Endothelial cell of umbilical vein (primary cell): ENCODE measurements at regions of chr14 and their contacts with region 1.

Region 1: GRCh38 chr14:59189786-59190771 is 1.6 kb downstream of the DAAM1 start:
- DNase-seq: peak; percentile 80
- H3K4me3 ChIP-seq: peak overlapping the region; percentile 77 to 85 (median 78)
- H3K27ac ChIP-seq: peak overlapping the region; percentile 72
- H3K4me1 ChIP-seq: peaks cover 13% of the 10 kb centered on the region
- H3K27me3 ChIP-seq: peaks cover 11 to 24% of the 10 kb centered on the region in 2 experiments
- CTCF ChIP-seq: no peak
- POLR2A ChIP-seq: no peak

Region 2: DNA sequence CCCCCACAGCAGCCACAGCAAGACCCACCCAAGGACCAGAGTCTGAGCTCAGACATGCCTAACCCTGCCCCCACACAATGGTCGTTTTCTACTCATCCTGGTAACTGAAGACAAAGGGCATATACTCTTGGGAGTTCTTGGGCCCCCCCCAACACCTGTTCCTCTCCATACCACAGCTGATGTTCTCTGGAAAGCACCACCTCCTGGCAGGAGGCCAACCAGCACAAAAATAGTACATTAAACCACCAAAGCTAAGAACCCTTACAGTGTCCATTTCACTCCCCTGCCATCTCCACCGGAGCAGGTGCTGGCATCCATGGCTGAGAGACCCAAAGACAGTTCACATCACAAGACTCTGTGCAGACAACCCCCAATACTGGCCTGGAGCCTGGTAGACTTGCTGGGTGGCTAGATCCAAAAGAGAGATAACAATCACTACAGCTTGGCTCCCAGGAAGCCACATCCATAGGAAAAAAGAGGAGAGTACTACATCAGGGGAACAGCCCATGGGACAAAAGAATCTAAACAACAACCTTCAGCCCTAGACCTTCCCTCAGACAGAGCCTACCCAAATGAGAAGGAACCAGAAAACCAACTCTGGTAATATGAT is 82.2 kb before region 1 on chr14:
- CTCF ChIA-PET with region 1: no interaction called
- POLR2A ChIA-PET with region 1: no interaction called
- dilution Hi-C with region 1: no loop called
- intact Hi-C with region 1: no loop called
- DNase-seq: no peak
- H3K4me3 ChIP-seq: no peak overlapping the region
- H3K27ac ChIP-seq: no peak overlapping the region
- H3K4me1 ChIP-seq: no peaks in the 10 kb centered on the region
- H3K27me3 ChIP-seq: peaks cover 2 to 7% of the 10 kb centered on the region in 2 experiments
- CTCF ChIP-seq: no peak
- POLR2A ChIP-seq: no peak

Region 3: DNA sequence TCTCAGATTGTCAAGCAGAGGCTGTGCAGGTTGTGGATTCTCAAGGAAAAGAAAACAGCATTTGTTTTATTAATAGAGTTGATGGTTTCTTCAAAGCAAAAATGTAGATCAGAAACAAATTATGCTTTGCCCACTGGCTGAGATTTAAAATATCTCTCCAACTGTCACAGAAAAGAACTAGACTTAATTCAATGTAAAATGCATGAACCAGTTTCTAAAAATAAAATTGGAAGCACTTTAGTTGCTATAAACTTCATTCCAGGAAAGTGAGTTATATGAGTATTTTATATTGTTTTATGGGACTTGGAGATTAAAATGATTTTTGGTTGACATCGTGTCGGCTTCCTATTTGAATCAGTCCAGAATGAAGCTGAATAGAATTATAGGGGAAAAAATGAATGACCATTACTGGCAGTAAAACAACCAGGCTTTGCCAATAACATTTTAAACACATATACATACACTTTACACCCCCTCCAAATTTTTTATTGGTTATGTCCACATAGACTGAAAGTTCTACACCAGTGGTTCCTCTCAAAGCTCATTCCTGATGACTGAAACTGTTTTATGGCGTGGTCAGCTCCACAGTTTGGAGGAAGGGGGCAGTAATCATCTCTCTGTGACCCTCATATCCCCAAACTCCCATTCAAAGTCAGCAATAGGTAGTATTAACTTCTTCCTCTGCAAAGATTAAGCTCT is 57.1 kb before region 1 on chr14:
- CTCF ChIA-PET with region 1: interaction called, 11 read pairs
- POLR2A ChIA-PET with region 1: no interaction called
- dilution Hi-C with region 1: no loop called
- intact Hi-C with region 1: no loop called
- DNase-seq: peak; percentile 31
- H3K4me3 ChIP-seq: no peak overlapping the region
- H3K27ac ChIP-seq: no peak overlapping the region
- H3K4me1 ChIP-seq: no peaks in the 10 kb centered on the region
- H3K27me3 ChIP-seq: peaks cover 0 to 2% of the 10 kb centered on the region in 2 experiments
- CTCF ChIP-seq: peak in 1 of 2 donors; percentile 34
- POLR2A ChIP-seq: no peak

Region 4: DNA sequence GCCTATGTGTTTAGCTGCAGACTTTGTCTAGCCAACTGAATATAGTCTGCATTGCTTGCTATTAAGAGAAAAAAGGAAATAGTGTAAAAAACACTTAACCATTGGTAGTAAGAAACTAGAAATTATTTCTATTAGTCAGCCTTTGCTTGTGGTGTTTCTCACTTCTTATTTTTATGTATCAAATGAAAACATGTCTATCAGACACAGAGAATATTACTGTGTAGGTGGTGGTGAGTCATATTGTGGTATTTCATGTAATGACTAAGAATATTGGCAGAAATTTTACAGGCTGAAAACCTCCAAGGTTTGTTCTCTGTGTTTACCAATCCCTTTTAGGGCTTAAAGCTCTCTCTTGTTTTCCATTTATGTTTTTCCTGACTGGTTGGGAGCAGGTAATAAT is 85.6 kb after region 1 on chr14:
- CTCF ChIA-PET with region 1: interaction called, 6 read pairs
- POLR2A ChIA-PET with region 1: interaction called, 4 read pairs
- dilution Hi-C with region 1: no loop called
- intact Hi-C with region 1: loop called (anchors 2 kb)
- DNase-seq: peak; percentile 89
- H3K4me3 ChIP-seq: no peak overlapping the region
- H3K27ac ChIP-seq: peak overlapping the region; percentile 60
- H3K4me1 ChIP-seq: peaks cover 43% of the 10 kb centered on the region
- H3K27me3 ChIP-seq: no peaks in the 10 kb centered on the region
- CTCF ChIP-seq: no peak
- POLR2A ChIP-seq: no peak

Region 5: GRCh38 chr14:59363531-59364226 is 173.6 kb after region 1 on chr14:
- CTCF ChIA-PET with region 1: interaction called, 3 read pairs
- POLR2A ChIA-PET with region 1: no interaction called
- dilution Hi-C with region 1: no loop called
- intact Hi-C with region 1: loop called (anchors 2 kb)
- DNase-seq: peak; percentile 74
- H3K4me3 ChIP-seq: peak overlapping the region in 1 of 3 experiments; percentile 40
- H3K27ac ChIP-seq: peak overlapping the region; percentile 73
- H3K4me1 ChIP-seq: peaks cover 43% of the 10 kb centered on the region
- H3K27me3 ChIP-seq: no peaks in the 10 kb centered on the region
- CTCF ChIP-seq: no peak
- POLR2A ChIP-seq: no peak